GM12878 (cell line): ENCODE measurements at regions of chr3 and their contacts with region 1.

Region 1: GRCh38 chr3:178048768-178049167 is 487.5 kb upstream of the KCNMB2 start:
- DNase-seq: no peak
- ATAC-seq: no peak
- H3K4me3 ChIP-seq: no peak overlapping the region
- H3K27ac ChIP-seq: no peak overlapping the region
- H3K4me1 ChIP-seq: no peaks in the 10 kb centered on the region
- H3K27me3 ChIP-seq: no peaks in the 10 kb centered on the region
- CTCF ChIP-seq: no peak
- EP300 ChIP-seq: no peak
- POLR2A ChIP-seq: no peak
- RAD21 ChIP-seq: no peak

Region 2: GRCh38 chr3:178255315-178255714 is 206.5 kb after region 1 on chr3:
- CTCF ChIA-PET with region 1: no interaction called
- POLR2A ChIA-PET with region 1: interaction called, 10 read pairs
- RAD21 ChIA-PET with region 1: no interaction called
- SMC1A ChIA-PET with region 1: no interaction called
- in situ Hi-C with region 1: no loop called
- intact Hi-C with region 1: no loop called
- DNase-seq: no peak
- ATAC-seq: no peak
- H3K4me3 ChIP-seq: no peak overlapping the region
- H3K27ac ChIP-seq: no peak overlapping the region
- H3K4me1 ChIP-seq: no peaks in the 10 kb centered on the region
- H3K27me3 ChIP-seq: no peaks in the 10 kb centered on the region
- CTCF ChIP-seq: no peak
- EP300 ChIP-seq: no peak
- POLR2A ChIP-seq: no peak
- RAD21 ChIP-seq: no peak